HAP-1 (cell line): ENCODE measurements at regions of chr10 and their contacts with region 1.

Region 1: DNA sequence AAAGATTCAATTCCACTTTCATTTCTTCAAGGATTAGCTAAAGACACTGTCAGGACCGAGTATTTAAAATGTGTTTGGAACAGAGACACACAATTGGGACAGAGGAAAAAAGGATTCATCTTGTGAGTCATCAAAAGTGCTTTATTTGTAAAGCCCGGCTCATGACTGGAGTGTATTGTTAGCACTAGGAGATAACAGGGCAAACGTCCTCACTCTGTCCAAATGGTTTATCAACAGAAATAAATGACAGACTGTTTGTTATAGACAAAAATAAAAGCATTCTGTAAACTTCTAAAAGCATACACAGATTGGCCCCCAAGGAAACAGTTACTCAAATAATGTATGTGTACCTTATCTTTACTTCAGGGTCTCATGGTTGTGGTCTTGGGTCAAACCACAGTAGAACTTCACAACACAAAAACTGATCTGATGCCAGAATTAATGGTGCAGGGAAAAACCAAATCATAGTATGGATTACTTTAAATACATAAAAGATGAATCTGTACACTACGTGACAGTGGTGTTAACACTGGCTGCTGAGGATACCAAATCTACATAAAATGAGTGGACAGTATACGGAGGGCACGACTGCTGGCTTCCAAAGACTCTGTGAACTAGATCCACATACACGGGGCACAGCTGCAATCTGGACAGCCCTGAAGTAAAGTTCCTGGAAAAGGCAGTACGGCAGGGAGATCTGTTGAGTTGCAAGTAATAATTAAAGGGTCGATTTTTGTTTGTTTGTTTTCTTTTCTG is 179.4 kb downstream of the PIP4K2A start:
- DNase-seq: no peak
- H3K4me3 ChIP-seq: no peak overlapping the region
- H3K4me1 ChIP-seq: no peaks in the 10 kb centered on the region
- H3K27me3 ChIP-seq: no peaks in the 10 kb centered on the region

Region 2: GRCh38 chr10:21989453-21990154 is 545.4 kb before region 1 on chr10:
- in situ Hi-C with region 1: loop called (anchors 25 kb)
- DNase-seq: peak; percentile 50 to 51
- H3K4me3 ChIP-seq: no peak overlapping the region
- H3K4me1 ChIP-seq: no peaks in the 10 kb centered on the region
- H3K27me3 ChIP-seq: no peaks in the 10 kb centered on the region